Sciatic nerve (tissue), 2 donors: ENCODE measurements at regions of chr3 and their contacts with region 1.

Region 1: DNA sequence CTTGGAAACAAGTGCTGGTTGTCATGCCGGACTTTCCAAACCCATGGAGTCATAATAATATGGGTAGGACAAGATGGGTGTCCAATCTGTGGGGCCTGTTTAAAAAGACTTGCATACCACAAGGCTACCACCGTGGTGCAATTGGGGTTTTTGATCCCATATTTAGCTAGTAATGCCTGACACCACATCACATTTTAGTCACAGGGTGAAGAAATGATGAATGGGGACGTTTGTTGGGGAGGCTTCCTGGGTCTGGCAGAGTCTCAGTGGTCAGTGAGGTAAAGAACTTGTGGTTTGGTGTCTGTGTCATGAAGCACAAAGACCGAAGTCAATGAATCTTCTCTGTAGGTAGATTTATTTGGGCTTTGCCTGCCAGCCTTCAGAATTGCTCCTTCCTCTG is 31.0 kb downstream of the P3H2 start:
- DNase-seq: no peak
- ATAC-seq: no peak

Region 2: DNA sequence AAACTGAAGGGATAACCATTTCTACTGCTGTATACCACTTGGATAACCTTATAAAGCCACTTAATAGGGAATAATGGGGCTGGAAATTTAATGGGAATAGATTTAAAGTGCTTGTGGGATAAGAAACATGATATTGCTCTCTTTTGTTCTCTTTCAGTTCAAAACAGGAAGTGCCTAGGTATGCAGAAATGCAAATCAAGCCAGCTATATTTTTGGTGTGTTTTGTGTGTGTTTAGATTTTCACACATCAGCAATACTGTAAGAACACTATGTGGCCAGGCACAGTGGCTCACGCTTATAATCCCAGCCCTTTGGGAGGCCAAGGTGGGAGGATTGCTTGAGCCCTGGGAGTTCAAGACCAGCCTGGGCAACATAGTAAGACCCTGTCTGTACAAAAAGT is 1360.3 kb before region 1 on chr3:
- intact Hi-C with region 1: loop called (anchors 5 kb)
- DNase-seq: no peak
- ATAC-seq: no peak

Region 3: DNA sequence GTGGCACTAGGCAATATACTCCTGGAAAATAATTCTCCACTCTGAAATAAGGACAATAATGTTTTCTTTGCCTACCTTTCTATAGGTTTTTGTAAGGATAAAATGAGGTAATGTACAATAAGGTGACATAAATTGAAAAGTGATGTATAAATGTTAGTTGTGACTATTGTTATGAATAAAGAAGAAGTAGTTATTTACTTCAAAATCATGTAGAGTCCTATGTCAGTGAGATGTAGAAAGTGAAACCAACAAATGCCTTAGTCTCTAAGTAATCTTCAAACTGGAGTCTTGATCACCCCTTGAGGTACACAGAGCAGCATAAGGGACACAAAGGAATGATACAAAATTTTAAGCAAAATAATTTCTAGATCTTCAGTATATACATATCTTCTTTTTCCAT is 518.8 kb before region 1 on chr3:
- intact Hi-C with region 1: no loop called
- DNase-seq: no peak
- ATAC-seq: no peak